ENCODE measurements at regions of chrX and their contacts with region 1.

Region 1: GRCh38 chrX:64758047-64758446 is 218.2 kb downstream of the ZC4H2 start:
- DNase-seq: no peak
- H3K4me3 Mint-ChIP-seq: no peak overlapping the region
- H3K27ac Mint-ChIP-seq: no peak overlapping the region
- H3K4me1 Mint-ChIP-seq: peaks cover 13% of the 10 kb centered on the region
- H3K27me3 Mint-ChIP-seq: no peaks in the 10 kb centered on the region

Region 2: GRCh38 chrX:64867217-64867616 is 109.2 kb after region 1 on chrX:
- CTCF ChIA-PET with region 1: no interaction called
- intact Hi-C with region 1: no loop called
- DNase-seq: no peak
- H3K4me3 Mint-ChIP-seq: no peak overlapping the region
- H3K27ac Mint-ChIP-seq: no peak overlapping the region
- H3K4me1 Mint-ChIP-seq: peaks cover 2% of the 10 kb centered on the region
- H3K27me3 Mint-ChIP-seq: no peaks in the 10 kb centered on the region

Region 3: GRCh38 chrX:65451663-65452062 is 693.6 kb after region 1 on chrX:
- CTCF ChIA-PET with region 1: no interaction called
- intact Hi-C with region 1: loop called (anchors 2 kb)
- DNase-seq: peak; percentile 26
- H3K4me3 Mint-ChIP-seq: no peak overlapping the region
- H3K27ac Mint-ChIP-seq: no peak overlapping the region
- H3K4me1 Mint-ChIP-seq: no peaks in the 10 kb centered on the region
- H3K27me3 Mint-ChIP-seq: no peaks in the 10 kb centered on the region

Measured in activated naive CD4-positive, alpha-beta T cell treated with anti-CD3 and anti-CD28 coated beads for 36 hours (primary cell).